ENCODE measurements at regions of chr3 and their contacts with region 1.

Region 1: GRCh38 chr3:170811928-170812591 is 57.9 kb downstream of the RPL22L1 start:
- DNase-seq: peak; percentile 90
- H3K4me3 Mint-ChIP-seq: peak overlapping the region; percentile 55
- H3K27ac Mint-ChIP-seq: peak overlapping the region; percentile 82
- H3K4me1 Mint-ChIP-seq: peaks cover 37% of the 10 kb centered on the region
- H3K27me3 Mint-ChIP-seq: no peaks in the 10 kb centered on the region
- CTCF ChIP-seq: peak; percentile 89

Region 2: GRCh38 chr3:169772897-169773828 is 1038.9 kb before region 1 on chr3 and contains the start of gene MYNN:
- CTCF ChIA-PET with region 1: no interaction called
- POLR2A ChIA-PET with region 1: no interaction called
- intact Hi-C with region 1: loop called (anchors 5 kb)
- DNase-seq: peak; percentile 87
- H3K4me3 Mint-ChIP-seq: peak within 1 kb of the TSS; percentile 94
- H3K27ac Mint-ChIP-seq: peak within 1 kb of the TSS; percentile 99
- H3K4me1 Mint-ChIP-seq: peaks cover 4% of the 10 kb centered on the region
- H3K27me3 Mint-ChIP-seq: no peaks in the 10 kb centered on the region
- CTCF ChIP-seq: no peak
- total RNA-seq, gene MYNN: 18.0 and 20.4 TPM in 2 replicates

Region 3: DNA sequence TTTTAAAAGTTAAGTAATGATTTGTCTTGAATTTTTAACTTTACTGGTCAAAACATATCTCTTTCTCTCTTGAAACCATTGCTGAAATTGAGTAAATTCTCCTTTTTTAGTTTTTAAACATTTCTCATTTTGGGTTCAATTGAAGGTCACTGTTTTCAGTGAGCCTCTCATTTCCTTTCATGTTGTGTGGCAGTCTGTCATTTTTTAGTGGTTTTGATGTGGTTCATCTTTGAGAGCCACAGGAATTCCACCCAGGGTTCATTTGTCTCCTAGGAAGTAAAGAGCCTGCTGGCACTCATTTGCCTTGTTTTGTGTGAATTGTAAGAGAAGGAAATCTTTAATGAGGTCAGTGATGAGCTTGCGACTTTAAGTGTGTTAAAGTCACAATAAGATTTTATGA is 383.0 kb before region 1 on chr3:
- CTCF ChIA-PET with region 1: interaction called, 14 read pairs
- POLR2A ChIA-PET with region 1: interaction called, 4 read pairs
- intact Hi-C with region 1: no loop called
- DNase-seq: no peak
- H3K4me3 Mint-ChIP-seq: no peak overlapping the region
- H3K27ac Mint-ChIP-seq: no peak overlapping the region
- H3K4me1 Mint-ChIP-seq: no peaks in the 10 kb centered on the region
- H3K27me3 Mint-ChIP-seq: no peaks in the 10 kb centered on the region
- CTCF ChIP-seq: no peak

Region 4: GRCh38 chr3:170499565-170500156 is 312.4 kb before region 1 on chr3:
- CTCF ChIA-PET with region 1: interaction called, 41 read pairs
- POLR2A ChIA-PET with region 1: interaction called, 3 read pairs
- intact Hi-C with region 1: loop called (anchors 1 kb)
- DNase-seq: peak; percentile 69
- H3K4me3 Mint-ChIP-seq: no peak overlapping the region
- H3K27ac Mint-ChIP-seq: no peak overlapping the region
- H3K4me1 Mint-ChIP-seq: peaks cover 6% of the 10 kb centered on the region
- H3K27me3 Mint-ChIP-seq: no peaks in the 10 kb centered on the region
- CTCF ChIP-seq: peak; percentile 62

Region 5: GRCh38 chr3:170689893-170690660 is 122.0 kb before region 1 on chr3:
- CTCF ChIA-PET with region 1: interaction called, 3 read pairs
- POLR2A ChIA-PET with region 1: interaction called, 21 read pairs
- intact Hi-C with region 1: no loop called
- DNase-seq: peak; percentile 39
- H3K4me3 Mint-ChIP-seq: no peak overlapping the region
- H3K27ac Mint-ChIP-seq: peak overlapping the region; percentile 89
- H3K4me1 Mint-ChIP-seq: peaks cover 33% of the 10 kb centered on the region
- H3K27me3 Mint-ChIP-seq: no peaks in the 10 kb centered on the region
- CTCF ChIP-seq: peak; percentile 41

Region 6: DNA sequence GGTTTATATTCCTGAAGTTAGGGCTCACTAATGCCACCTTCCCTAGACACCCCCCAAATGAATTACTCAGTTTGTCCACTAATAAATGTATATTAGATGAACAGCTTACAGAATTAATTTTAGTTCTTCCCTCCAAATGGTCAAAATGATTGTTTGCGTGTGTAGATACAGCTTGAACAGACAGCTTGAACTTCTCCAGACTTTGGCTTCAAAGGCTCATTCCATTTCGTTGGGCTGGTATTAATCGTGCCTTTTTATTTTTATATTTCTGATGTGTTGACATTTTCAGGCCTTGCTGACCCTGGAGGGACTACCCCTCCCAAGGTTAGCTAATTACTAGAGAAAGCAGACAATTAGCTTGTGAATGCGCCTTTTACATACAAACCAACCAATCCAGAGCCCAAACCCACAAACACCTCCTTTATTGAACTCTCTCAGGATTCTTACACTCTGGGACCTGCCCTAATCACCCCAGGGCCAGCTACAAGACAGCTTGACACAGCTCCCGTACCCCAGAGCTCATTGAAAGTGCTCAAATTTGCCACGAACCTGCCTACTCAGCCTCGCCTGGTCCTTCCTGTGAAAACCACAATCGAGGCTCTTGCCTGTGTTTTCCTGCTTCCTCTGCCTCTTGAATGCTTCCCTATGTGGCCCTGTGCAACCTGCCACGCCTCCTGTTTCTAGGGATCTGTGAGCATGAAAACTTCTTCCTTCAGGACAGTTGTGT is 17.6 kb after region 1 on chr3:
- CTCF ChIA-PET with region 1: interaction called, 55 read pairs
- POLR2A ChIA-PET with region 1: interaction called, 3 read pairs
- intact Hi-C with region 1: no loop called
- DNase-seq: no peak
- H3K4me3 Mint-ChIP-seq: no peak overlapping the region
- H3K27ac Mint-ChIP-seq: no peak overlapping the region
- H3K4me1 Mint-ChIP-seq: no peaks in the 10 kb centered on the region
- H3K27me3 Mint-ChIP-seq: no peaks in the 10 kb centered on the region
- CTCF ChIP-seq: no peak

Region 7: DNA sequence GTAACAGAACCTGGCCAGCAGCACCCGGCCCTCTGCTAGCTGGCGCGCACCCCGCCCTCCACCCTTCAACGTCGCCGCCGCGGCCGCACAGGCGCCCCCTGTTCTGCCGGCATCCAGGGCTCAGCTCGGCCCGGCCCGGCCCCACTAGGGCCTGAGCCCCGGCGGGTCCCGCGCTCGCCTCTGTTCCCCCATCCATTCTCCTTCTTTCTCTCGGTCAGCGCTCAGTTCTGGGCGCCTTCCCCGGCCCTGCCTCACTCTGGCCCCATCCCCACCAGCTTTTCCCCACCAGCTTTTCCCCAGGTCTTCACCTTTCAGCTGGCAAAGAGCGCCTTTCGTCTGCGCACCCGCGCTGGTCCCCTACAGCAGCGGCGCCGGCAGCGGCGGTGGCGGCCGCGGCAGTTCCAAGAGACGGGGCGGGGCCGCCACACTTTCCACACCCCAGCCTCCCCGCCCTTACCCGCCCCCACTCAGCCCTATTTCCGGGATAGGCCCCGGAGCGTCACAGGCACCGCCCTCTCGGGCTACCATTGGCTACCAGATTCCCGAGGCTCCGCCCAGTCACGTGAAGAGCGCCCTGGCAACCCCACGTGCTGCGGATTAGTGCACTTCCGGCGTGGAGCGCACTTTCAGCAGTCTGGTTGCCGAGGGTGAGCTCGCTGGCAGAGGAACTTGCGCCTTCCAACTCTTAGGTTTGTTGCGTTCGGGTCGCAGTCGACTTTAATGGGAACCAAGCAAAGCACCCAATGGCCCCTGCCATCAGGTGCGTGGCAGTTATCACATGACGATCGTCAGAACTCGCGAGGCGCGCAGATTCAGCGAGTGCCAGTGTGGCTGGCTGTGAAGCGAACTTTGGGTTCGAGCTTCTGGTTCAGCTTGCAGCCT is 96.4 kb after region 1 on chr3 and contains the start of gene EIF5A2:
- CTCF ChIA-PET with region 1: interaction called, 11 read pairs
- POLR2A ChIA-PET with region 1: no interaction called
- intact Hi-C with region 1: no loop called
- DNase-seq: peak; percentile 88
- H3K4me3 Mint-ChIP-seq: peak within 1 kb of the TSS; percentile 85
- H3K27ac Mint-ChIP-seq: peak within 1 kb of the TSS; percentile 80
- H3K4me1 Mint-ChIP-seq: peaks cover 5% of the 10 kb centered on the region
- H3K27me3 Mint-ChIP-seq: no peaks in the 10 kb centered on the region
- CTCF ChIP-seq: no peak
- total RNA-seq, gene EIF5A2: 6.0 and 15.0 TPM in 2 replicates

Region 8: GRCh38 chr3:171162986-171163723 is 351.1 kb after region 1 on chr3:
- CTCF ChIA-PET with region 1: no interaction called
- POLR2A ChIA-PET with region 1: no interaction called
- intact Hi-C with region 1: no loop called
- DNase-seq: peak; percentile 46
- H3K4me3 Mint-ChIP-seq: no peak overlapping the region
- H3K27ac Mint-ChIP-seq: no peak overlapping the region
- H3K4me1 Mint-ChIP-seq: peaks cover 10% of the 10 kb centered on the region
- H3K27me3 Mint-ChIP-seq: no peaks in the 10 kb centered on the region
- CTCF ChIP-seq: peak; percentile 51

Measured in MCF 10A (cell line).